Heart right ventricle (tissue), 16 donors: ENCODE measurements at regions of chr18 and their contacts with region 1.

Region 1: DNA sequence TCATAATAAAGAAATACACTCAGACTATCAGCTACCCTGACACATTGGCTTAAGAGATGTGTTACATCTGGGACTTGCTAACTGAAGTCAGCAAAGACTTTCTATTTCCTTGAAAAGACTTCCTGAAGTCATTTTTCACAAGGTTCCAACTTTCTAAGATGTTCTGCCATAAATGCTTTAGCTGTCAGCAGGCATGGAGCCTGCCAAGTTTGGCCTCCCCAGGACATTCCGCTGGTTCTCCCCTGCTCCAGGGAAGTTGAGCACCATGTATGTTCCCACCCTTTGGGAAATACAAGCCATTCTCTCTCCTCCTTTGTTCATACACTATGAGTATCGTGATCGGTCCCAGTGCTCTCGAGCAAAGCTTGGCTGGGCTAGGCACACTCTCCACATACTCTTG is 202.7 kb upstream of the CCDC68 start:
- DNase-seq: no peak
- ATAC-seq: peak in 1 of 8 donors; percentile 33
- H3K4me3 ChIP-seq: no peak overlapping the region
- H3K27ac ChIP-seq: no peak overlapping the region
- H3K4me1 ChIP-seq: peaks cover 0 to 3% (median 0%) of the 10 kb centered on the region in 9 donors
- H3K27me3 ChIP-seq: no peaks in the 10 kb centered on the region
- CTCF ChIP-seq: no peak

Region 2: GRCh38 chr18:55119434-55119833 is 42.5 kb before region 1 on chr18:
- intact Hi-C with region 1: loop called in 1 of 10 experiments (anchors 2 kb)
- DNase-seq: peak in 1 of 2 donors; percentile 19
- ATAC-seq: peak in 6 of 8 donors; percentile 22 to 78 (median 59)
- H3K4me3 ChIP-seq: no peak overlapping the region
- H3K27ac ChIP-seq: peak overlapping the region in 7 of 10 donors; percentile 9 to 73 (median 48)
- H3K4me1 ChIP-seq: peaks cover 0 to 44% (median 6%) of the 10 kb centered on the region in 9 donors
- H3K27me3 ChIP-seq: no peaks in the 10 kb centered on the region
- CTCF ChIP-seq: no peak

Region 3: GRCh38 chr18:55927831-55928230 is 765.9 kb after region 1 on chr18:
- intact Hi-C with region 1: no loop called
- DNase-seq: no peak
- ATAC-seq: no peak
- H3K4me3 ChIP-seq: no peak overlapping the region
- H3K27ac ChIP-seq: no peak overlapping the region
- H3K4me1 ChIP-seq: peaks cover 0 to 5% (median 0%) of the 10 kb centered on the region in 9 donors
- H3K27me3 ChIP-seq: no peaks in the 10 kb centered on the region
- CTCF ChIP-seq: no peak